ENCODE measurements at regions of chr3 and their contacts with region 1.

Region 1: GRCh38 chr3:15647611-15648167 is 46.1 kb downstream of the BTD start:
- DNase-seq: peak; percentile 32
- ATAC-seq: peak; percentile 93
- H3K4me3 Mint-ChIP-seq: peak overlapping the region; percentile 68
- H3K27ac Mint-ChIP-seq: peak overlapping the region; percentile 83
- H3K4me1 Mint-ChIP-seq: peaks cover 45% of the 10 kb centered on the region
- H3K27me3 Mint-ChIP-seq: no peaks in the 10 kb centered on the region
- CTCF ChIP-seq: no peak

Region 2: GRCh38 chr3:15623535-15624440 is 23.9 kb before region 1 on chr3:
- CTCF ChIA-PET with region 1: no interaction called
- POLR2A ChIA-PET with region 1: no interaction called
- intact Hi-C with region 1: no loop called
- DNase-seq: no peak
- ATAC-seq: no peak
- H3K4me3 Mint-ChIP-seq: no peak overlapping the region
- H3K27ac Mint-ChIP-seq: no peak overlapping the region
- H3K4me1 Mint-ChIP-seq: peaks cover 6% of the 10 kb centered on the region
- H3K27me3 Mint-ChIP-seq: no peaks in the 10 kb centered on the region
- CTCF ChIP-seq: no peak

Region 3: DNA sequence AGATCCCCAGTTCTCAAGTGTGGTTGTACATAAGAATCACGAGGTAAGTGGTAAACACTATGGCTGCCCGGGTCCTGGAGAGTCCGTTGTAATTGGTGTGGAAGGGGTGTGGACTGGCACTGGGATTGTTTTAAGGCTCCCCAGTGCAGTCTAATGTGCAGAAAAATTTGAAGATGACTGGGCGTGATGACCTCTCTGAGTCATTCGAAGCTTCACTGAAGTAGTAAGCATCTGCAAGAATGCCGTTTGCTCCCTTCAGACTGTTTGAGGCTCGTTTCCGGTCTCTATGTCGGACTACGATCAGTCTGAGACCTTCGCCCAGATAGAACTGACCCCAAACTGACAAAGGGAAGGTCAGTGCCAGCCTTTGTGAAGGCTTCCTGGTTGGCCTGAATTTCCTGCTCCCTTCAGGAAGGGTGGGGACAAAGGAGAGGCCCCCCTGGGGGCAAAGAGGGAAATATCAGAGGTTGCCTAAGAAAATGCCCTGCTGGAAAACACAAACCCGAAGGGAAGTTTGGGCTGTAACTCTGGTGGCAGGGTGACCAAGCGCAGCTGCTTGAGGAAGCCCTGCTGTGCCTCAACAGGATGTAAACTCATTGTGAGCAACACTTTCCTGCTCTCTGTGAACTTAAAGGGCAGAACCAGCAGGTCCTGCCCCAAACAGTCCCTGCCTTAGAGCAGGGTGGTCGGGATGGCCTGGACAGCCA is 11.5 kb before region 1 on chr3:
- CTCF ChIA-PET with region 1: interaction called, 5 read pairs
- POLR2A ChIA-PET with region 1: no interaction called
- intact Hi-C with region 1: loop called (anchors 1 kb)
- DNase-seq: no peak
- ATAC-seq: peak; percentile 67
- H3K4me3 Mint-ChIP-seq: peak overlapping the region; percentile 3
- H3K27ac Mint-ChIP-seq: peak overlapping the region; percentile 78
- H3K4me1 Mint-ChIP-seq: peaks cover 32% of the 10 kb centered on the region
- H3K27me3 Mint-ChIP-seq: no peaks in the 10 kb centered on the region
- CTCF ChIP-seq: no peak

Region 4: DNA sequence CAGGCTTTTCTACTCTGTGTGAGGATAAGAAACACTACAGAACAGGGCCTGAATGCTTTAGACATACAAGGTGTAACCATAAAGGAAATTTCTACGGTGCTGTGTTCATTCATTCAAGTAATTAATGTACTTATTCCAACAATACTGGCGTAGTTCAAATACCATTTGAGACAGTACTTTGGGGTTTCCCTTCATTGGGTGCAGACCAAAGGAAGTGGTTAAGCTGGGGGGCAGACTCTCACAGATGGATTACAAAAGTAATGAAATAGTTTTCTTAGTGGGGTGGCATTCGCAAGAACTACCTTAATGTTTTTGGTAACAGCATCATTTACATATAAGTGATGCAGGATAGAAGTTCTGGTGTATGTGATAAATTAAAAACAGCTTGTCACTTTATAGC is 19.8 kb after region 1 on chr3:
- CTCF ChIA-PET with region 1: no interaction called
- POLR2A ChIA-PET with region 1: interaction called, 3 read pairs
- intact Hi-C with region 1: loop called (anchors 1 kb)
- DNase-seq: no peak
- ATAC-seq: peak; percentile 69
- H3K4me3 Mint-ChIP-seq: no peak overlapping the region
- H3K27ac Mint-ChIP-seq: no peak overlapping the region
- H3K4me1 Mint-ChIP-seq: peaks cover 14% of the 10 kb centered on the region
- H3K27me3 Mint-ChIP-seq: no peaks in the 10 kb centered on the region
- CTCF ChIP-seq: no peak

Region 5: GRCh38 chr3:15805756-15806266 is 158.1 kb after region 1 on chr3:
- CTCF ChIA-PET with region 1: interaction called, 7 read pairs
- POLR2A ChIA-PET with region 1: no interaction called
- intact Hi-C with region 1: loop called (anchors 5 kb)
- DNase-seq: no peak
- ATAC-seq: peak; percentile 83
- H3K4me3 Mint-ChIP-seq: peak overlapping the region; percentile 45
- H3K27ac Mint-ChIP-seq: peak overlapping the region; percentile 80
- H3K4me1 Mint-ChIP-seq: peaks cover 60% of the 10 kb centered on the region
- H3K27me3 Mint-ChIP-seq: no peaks in the 10 kb centered on the region
- CTCF ChIP-seq: no peak

Region 6: DNA sequence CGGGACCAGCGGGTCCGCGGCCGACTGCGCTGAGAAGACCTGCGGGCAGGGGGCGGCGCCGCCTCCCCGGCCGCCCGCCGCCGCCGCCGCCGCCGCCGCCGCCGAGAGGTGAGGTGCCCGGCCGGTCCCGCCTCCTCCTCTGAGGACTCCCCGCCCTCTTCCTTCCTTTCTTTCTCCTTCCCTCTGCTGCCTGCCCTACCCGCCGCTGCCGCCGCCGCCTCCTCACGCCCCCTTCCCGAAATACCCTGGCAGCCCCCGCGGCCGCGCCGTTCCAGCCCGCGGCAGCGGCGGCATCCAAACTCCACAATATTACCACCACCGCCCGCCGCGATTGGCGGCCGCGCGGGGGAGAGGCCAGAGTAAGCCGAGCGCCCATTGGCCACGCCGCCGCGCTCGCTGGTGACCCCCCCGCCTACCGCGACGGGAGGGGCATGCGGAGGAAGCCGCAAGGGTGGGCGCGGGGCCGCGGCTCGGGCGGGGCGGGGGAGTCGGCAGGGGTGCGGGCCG is 211.9 kb after region 1 on chr3:
- CTCF ChIA-PET with region 1: interaction called, 4 read pairs
- POLR2A ChIA-PET with region 1: no interaction called
- intact Hi-C with region 1: loop called (anchors 1 kb)
- DNase-seq: peak; percentile 77
- ATAC-seq: peak; percentile 77
- H3K4me3 Mint-ChIP-seq: peak overlapping the region; percentile 99
- H3K27ac Mint-ChIP-seq: peak overlapping the region; percentile 95
- H3K4me1 Mint-ChIP-seq: peaks cover 27% of the 10 kb centered on the region
- H3K27me3 Mint-ChIP-seq: no peaks in the 10 kb centered on the region
- CTCF ChIP-seq: no peak

Region 7: DNA sequence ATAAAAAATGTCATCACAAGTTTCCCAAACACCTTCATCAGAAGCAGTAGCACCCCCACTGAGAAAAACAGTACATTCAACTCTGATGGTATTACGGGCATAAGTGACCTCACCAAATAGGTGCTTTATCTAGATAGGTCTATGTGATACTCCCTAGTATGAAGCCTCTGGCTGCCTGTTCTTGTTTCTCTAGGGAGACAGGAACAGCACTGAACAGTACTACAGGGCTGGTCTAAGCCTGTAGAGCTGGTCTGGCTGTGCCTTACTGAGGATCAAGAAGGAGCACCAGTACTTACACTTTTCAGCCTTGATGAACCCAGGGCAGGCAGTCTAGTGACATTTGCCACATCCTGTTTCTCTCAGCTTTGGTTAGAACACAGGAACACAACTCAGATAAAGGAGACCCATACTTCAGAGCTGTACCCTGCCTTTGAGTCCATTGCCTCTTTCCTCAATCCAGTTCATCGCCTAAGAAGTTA is 653.2 kb after region 1 on chr3:
- CTCF ChIA-PET with region 1: no interaction called
- POLR2A ChIA-PET with region 1: no interaction called
- intact Hi-C with region 1: no loop called
- DNase-seq: no peak
- ATAC-seq: peak; percentile 63
- H3K4me3 Mint-ChIP-seq: peak overlapping the region; percentile 35
- H3K27ac Mint-ChIP-seq: peak overlapping the region; percentile 53
- H3K4me1 Mint-ChIP-seq: peaks cover 41% of the 10 kb centered on the region
- H3K27me3 Mint-ChIP-seq: no peaks in the 10 kb centered on the region
- CTCF ChIP-seq: no peak